WTC11 (cell line): ENCODE measurements at regions of chr21 and their contacts with region 1.

Region 1: DNA sequence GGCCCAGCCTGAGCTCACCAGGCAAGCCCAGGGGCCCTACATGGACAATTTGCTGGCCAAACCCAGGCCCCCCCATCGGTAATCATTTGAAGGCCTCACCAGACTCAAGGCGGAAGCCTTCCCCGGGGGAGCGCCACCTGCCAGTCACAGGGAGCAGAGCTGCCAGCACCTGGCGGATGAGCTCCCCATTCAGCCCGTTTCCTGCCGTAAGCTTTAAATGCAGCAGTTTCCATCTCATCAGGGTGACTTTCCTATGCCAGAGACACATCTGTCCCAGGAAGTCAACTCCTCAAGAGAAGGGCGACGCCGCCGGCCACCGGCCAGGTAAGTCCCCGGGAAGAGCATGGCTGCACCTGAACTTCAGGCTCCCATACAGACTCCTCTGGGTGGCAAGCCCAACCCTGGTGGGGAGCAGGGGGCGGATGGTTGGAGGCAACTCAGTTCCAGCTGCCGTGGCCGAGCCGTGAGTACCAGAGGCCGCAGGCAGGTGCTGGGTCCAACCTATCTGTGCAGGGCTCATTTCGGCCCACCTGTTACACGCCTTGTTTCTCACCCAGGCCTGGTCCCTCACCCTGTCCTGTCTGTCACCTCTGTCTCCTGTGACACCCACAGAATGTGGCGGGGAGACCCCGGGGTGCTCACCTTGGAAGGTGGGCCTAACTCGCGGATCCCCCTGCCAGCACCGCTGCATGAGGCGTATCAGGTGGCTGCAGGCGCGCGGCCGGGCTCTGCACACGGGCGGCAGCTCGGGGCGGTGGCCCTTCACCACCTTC is 20.7 kb downstream of the RIPK4 start:
- DNase-seq: peak; percentile 44
- ATAC-seq: peak; percentile 69
- H3K4me3 Mint-ChIP-seq: no peak overlapping the region
- H3K27ac Mint-ChIP-seq: no peak overlapping the region
- H3K4me1 Mint-ChIP-seq: peaks cover 7% of the 10 kb centered on the region
- H3K27me3 Mint-ChIP-seq: no peaks in the 10 kb centered on the region
- CTCF ChIP-seq: no peak

Region 2: DNA sequence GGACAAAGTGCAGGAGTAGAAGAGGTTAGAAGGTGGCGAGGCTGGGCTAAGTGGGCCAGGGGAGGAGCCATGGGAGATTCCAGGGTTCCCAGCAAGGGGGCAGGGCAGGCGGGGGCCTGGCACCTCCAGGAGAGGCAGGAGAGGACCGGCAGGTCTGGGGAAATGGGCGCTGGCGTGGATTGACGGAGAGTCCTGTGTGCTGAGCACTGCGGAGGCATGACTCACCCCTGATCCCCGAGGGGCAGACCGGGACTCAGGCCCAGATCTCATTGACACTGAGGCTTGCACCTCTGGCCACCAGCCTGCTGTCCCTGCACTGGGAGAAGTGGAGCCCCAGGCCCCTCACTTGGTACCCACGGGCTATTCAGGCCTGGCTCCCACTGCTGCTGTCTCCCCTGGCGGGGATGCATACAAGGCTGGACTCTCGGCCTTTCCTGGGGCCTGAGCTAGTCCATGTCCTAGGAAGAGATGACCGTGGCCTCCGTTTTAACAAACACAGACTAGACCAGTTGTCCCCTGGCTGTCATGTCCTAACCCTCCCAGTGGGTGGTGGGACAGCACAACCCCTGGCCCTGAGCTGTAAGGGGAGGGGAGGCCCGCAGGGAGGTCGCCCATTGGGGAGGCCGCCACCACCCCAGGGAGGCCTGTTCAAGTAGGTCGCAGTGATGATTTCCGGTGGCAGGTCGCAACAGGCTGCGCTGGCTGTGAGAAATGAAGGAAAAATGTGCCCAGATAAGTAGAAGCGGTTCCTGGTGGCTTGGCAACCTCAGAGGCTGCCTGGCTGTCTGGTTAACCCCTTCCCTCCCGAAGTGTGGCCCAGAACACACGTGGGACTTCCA is 19.0 kb before region 1 on chr21:
- CTCF ChIA-PET with region 1: interaction called, 10 read pairs
- POLR2A ChIA-PET with region 1: no interaction called
- DNase-seq: no peak
- ATAC-seq: no peak
- H3K4me3 Mint-ChIP-seq: no peak overlapping the region
- H3K27ac Mint-ChIP-seq: no peak overlapping the region
- H3K4me1 Mint-ChIP-seq: peaks cover 15% of the 10 kb centered on the region
- H3K27me3 Mint-ChIP-seq: peaks cover 38% of the 10 kb centered on the region
- CTCF ChIP-seq: no peak

Region 3: DNA sequence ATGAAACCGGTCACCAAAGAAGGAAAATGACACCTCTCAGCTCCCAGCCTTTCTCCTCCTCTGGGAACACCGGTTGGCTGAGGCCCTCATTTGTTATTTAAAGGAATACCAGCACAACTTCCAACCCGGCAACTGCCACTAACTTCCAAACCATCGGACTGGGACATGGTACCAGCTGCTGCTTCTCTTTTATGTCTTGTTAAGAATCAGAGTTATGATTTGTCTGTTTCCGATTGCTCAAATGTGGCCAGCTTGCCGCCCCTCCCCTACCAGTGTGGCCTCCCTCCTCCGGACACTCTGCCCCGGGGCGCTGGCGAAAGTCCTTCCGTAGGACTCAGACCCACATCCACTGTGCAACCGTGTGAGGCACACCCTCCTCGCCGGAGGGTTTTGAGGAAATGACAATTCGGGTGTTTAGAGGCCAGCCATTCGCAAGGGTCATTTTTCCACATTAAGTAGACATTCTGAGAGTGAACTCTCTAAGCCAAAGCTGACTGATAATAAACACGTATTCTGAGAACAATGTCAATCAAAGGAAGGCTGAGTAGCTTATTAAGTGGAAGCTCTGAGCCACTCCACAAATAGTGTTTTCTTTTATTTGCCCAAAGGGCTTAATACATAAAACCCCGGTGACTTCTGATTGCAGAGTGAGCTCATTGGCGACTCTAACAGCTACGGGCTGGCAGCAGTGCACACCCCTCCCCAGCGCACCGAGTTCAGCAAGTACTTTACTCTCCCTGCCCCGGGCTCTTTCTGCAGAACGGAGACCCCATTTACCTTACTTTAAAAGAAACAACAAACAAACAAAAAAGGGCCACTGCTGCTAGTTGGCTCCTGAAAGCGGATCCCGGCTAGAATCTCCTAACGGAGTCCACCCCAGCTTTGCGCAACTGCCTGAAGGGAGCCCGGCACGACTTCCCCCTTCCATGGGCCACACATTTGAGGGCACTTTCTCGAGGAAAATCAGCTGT is 15.3 kb after region 1 on chr21:
- CTCF ChIA-PET with region 1: interaction called, 28 read pairs
- POLR2A ChIA-PET with region 1: interaction called, 4 read pairs
- DNase-seq: no peak
- ATAC-seq: peak; percentile 3; the same call in 1 of the 2 replicates
- H3K4me3 Mint-ChIP-seq: peak overlapping the region; percentile 82
- H3K27ac Mint-ChIP-seq: peak overlapping the region; percentile 92
- H3K4me1 Mint-ChIP-seq: peaks cover 81% of the 10 kb centered on the region
- H3K27me3 Mint-ChIP-seq: peaks cover 55% of the 10 kb centered on the region
- CTCF ChIP-seq: no peak

Region 4: DNA sequence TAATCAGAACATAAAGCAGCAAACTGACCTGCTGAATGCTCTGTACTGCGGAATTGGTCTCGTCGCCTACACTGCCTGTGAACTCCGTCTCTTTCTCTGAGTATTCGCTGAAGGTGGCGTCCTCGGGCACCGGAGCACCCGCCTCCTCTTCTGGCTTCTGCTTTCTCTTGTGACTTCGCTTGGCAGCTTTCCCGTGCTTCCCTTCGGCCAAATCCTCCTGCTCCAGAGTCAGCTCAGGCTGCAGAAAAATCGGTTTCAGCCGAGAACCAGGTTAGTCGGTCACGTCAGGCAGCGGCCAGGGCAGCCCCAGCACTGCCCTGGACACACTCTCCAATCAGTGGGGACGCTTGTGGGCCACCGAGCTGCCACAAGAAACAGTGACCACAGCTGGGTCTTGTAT is 56.5 kb after region 1 on chr21:
- CTCF ChIA-PET with region 1: no interaction called
- POLR2A ChIA-PET with region 1: no interaction called
- DNase-seq: no peak
- ATAC-seq: no peak
- H3K4me3 Mint-ChIP-seq: no peak overlapping the region
- H3K27ac Mint-ChIP-seq: peak overlapping the region; percentile 45; the same call in 1 of the 2 replicates
- H3K4me1 Mint-ChIP-seq: no peaks in the 10 kb centered on the region
- H3K27me3 Mint-ChIP-seq: no peaks in the 10 kb centered on the region
- CTCF ChIP-seq: no peak

Region 5: GRCh38 chr21:42027822-42028765 is 281.9 kb after region 1 on chr21:
- CTCF ChIA-PET with region 1: no interaction called
- POLR2A ChIA-PET with region 1: no interaction called
- DNase-seq: no peak
- ATAC-seq: no peak
- H3K4me3 Mint-ChIP-seq: no peak overlapping the region
- H3K27ac Mint-ChIP-seq: no peak overlapping the region
- H3K4me1 Mint-ChIP-seq: no peaks in the 10 kb centered on the region
- H3K27me3 Mint-ChIP-seq: no peaks in the 10 kb centered on the region
- CTCF ChIP-seq: no peak